Posterior vena cava (tissue), 2 donors: ENCODE measurements at regions of chr14 and their contacts with region 1.

Region 1: GRCh38 chr14:89915114-89915878 is 39.2 kb downstream of the EFCAB11 start:
- DNase-seq: no peak

Region 2: GRCh38 chr14:89027097-89027740 is 888.1 kb before region 1 on chr14:
- intact Hi-C with region 1: loop called (anchors 5 to 10 kb)
- DNase-seq: peak; percentile 90

Region 3: DNA sequence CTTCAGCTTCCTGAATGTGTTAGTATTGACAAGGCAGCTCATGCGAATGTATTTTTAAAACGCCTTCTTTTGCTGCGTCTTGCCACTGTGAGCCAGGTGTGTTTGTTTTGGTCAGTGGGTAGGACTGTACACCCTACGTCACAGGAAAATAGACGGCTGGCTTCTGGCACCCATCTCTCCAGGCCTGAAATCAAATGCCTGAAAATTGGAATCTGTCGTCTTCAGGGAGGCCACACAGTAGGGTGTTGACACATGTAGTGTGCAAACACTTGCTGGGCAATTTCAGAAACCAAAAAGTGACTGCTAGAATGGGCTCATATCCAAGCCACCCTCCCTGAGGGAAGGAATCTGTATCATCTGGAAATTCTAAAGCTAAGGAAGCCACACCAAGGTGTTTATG is 881.5 kb before region 1 on chr14:
- intact Hi-C with region 1: loop called (anchors 5 to 10 kb)
- DNase-seq: no peak

Region 4: DNA sequence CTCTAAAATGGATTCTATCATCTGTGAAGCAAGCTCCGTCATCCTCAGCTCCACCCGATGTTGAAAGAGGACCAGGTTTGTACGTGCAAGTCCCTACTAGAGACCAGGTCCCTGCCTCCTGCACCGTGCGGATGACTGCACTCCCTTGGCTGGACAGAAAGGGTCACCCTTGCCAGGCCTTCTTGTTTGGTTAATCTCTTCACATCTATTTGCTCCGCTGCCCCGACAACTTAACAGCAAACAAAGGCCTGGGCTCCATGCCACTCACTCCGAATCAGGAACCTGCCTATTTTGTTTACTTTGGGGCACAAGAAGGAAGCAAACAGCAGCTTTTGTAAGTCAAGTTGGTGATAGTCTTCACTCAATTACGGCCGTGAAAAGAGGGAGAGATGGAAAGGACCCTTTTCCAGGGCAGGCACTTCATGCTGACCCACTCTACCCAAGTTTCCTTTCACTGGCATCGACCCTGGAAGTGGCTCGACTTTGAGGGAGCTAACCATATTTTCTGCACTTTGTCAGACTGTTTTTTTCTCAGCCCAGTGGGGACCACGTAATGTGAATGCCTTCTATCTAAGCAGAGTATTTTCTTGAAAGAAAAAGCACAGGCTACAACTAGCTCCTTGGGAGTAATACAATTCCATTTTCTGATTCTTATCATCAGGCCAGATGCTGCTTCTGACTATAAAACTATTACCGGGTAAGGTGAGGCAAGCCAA is 700.9 kb before region 1 on chr14:
- intact Hi-C with region 1: no loop called
- DNase-seq: peak; percentile 89

Region 5: GRCh38 chr14:89416002-89416995 is 499.0 kb before region 1 on chr14:
- intact Hi-C with region 1: loop called (anchors 5 to 10 kb)
- DNase-seq: peak; percentile 100

Region 6: DNA sequence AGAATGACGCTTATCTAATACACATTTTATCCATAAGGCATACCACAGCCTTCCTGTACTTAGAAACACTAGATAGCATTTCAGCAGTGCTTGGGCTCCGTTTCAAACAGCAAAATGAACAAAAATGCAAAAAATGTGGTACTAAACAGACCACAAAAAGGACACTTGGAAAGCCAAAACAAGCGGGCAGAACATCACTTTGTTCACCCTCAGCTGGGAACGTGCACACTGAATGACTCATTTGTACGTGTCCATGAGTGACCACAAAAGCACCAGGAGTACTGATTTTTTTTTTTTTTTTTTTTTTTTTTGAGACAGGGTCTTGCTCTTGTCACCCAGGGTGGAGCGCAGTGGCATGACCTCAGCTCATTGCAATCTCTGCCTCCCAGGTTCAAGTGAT is 489.4 kb before region 1 on chr14:
- intact Hi-C with region 1: loop called in 1 of 2 experiments (anchors 10 kb)
- DNase-seq: no peak

Region 7: DNA sequence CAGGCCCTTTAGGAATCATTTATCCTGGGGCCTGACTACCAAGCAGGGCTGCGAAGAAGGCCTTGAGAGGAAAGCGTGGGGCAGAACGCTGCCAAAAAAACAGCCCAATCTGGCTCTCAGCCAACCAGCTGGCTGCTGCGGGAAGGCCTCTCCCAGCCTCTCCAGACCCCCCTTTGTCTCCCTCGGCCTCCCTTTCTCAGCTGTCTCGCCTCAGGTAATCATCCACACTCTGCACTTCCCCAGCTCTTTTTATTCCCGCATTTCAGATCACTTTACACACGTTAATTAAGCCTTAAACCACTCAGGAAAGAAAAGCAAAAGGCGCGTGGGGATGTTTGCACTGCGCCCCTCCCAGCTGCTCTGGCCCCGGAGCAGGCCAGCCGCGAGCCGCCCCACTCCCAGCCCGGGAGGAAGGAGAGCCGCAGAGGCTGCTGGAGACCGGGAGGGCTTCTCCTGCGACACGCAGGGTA is 290.0 kb before region 1 on chr14:
- intact Hi-C with region 1: loop called in 1 of 2 experiments (anchors 10 kb)
- DNase-seq: no peak

Region 8: DNA sequence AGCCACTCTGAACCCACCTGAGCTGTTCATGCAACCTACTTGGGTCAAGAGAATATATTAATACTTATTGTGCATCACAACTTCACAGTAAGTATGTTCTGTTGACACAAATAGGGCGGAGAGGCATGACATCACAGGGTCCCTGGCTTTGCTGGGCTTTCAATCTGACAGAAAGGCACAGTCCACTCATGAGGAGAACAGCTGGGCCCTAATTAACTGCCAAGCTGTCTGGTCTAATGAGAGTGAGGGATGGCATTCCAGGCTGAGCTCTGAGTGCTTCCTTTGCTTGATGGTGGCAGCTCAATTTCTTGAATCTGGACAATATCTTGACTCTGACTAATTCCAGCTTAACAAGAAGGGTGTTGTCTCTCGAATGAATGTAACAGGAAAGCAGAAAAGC is 37.3 kb after region 1 on chr14:
- intact Hi-C with region 1: no loop called
- DNase-seq: no peak

Region 9: DNA sequence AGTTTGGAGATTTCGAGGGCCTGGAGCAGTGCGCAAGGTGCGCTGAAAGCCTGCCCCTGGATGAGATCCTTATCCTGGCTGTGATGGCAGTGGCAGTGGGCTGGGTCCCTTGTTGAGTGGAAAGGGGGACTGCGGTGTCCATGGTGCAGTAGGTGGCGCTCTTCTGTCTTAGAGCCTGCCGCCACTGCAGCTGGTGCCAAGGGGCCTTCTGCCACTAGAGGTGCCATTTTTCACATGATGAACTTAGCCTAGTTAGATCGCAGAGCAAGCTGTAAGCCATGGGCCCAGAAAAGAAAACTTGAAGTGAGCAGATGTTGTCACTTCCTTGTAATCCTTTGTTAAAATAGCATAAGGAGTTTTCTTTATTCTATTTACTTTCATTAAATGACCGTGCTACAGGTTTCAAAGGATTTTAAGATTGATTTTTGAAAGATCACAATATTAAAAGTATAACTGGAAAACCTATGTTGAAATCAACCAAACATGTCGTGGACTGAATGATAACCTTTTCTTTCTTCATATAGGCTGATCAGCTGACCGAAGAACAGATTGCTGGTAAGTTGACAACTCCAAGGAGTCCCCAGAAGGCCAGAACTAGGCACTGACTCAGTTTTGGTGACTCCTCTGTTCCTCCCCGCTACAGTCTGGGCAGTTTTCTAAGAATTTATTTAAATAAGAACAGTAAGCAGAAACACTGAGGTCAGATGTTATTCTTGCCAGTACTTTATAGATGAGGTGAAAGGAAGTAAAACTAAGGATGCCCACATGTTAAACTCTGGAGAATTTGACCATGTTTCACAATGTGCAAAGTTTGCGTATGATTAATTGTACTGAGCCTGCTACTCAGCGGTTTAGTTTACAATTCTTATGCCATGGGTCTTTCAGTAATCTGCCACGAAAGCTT is 484.5 kb after region 1 on chr14:
- intact Hi-C with region 1: no loop called
- DNase-seq: peak; percentile 96